Astrocyte of the cerebellum (primary cell): ENCODE measurements at regions of chr2 and their contacts with region 1.

Region 1: GRCh38 chr2:241081643-241082340 is 20.3 kb downstream of the MTERF4 start:
- DNase-seq: no peak
- H3K4me3 ChIP-seq: no peak overlapping the region
- CTCF ChIP-seq: no peak

Region 2: DNA sequence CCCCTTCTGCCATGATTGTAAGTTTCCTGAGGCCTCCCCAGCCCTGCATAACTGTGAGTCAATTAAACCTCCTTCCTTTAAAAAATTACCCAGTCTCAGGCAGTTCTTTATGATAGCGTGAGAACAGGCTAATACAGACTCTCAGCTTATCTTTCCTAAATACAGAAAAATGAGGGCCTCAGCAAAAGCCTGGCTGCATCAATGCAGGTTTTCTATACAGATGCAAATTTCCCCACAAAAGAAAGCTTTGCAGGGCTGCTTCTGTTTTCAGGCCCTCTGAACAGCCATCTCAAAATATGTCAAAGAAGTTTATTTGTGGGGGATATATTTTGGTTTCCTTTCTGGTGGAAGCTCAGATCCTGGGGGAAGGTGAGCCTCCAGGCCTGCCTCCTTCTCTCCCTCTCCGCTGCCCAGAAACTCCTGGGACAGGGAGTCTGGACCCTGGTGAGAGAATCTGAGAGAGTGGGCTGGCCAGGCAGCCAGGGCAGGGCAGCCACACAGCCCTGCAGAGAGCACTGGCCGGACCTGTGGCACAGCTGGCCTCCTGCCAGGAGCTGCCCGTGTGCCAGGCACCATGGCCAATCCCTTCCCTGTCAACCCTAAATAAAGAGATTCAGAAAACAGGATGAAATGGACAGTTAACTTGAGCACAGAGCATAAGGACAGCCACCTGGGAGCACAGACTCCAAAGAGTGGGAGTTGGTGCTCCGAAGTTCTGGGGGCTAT is 234.8 kb before region 1 on chr2:
- in situ Hi-C with region 1: loop called (anchors 5 kb)
- DNase-seq: no peak
- H3K4me3 ChIP-seq: no peak overlapping the region
- CTCF ChIP-seq: no peak